ENCODE measurements at regions of chr7 and their contacts with region 1.

Region 1: GRCh38 chr7:130242198-130243014 is 24.3 kb upstream of the CPA2 start:
- DNase-seq: peak; percentile 82
- ATAC-seq: peak; percentile 92
- H3K4me3 ChIP-seq: no peak overlapping the region
- H3K27ac ChIP-seq: no peak overlapping the region
- H3K4me1 ChIP-seq: no peaks in the 10 kb centered on the region
- H3K27me3 ChIP-seq: no peaks in the 10 kb centered on the region
- CTCF ChIP-seq: peak; percentile 64
- POLR2A ChIP-seq: no peak
- RAD21 ChIP-seq: peak; percentile 80

Region 2: GRCh38 chr7:129252128-129252527 is 990.3 kb before region 1 on chr7:
- CTCF ChIA-PET with region 1: no interaction called
- POLR2A ChIA-PET with region 1: no interaction called
- dilution Hi-C with region 1: no loop called
- in situ Hi-C with region 1: no loop called
- intact Hi-C with region 1: no loop called
- DNase-seq: no peak
- ATAC-seq: no peak
- H3K4me3 ChIP-seq: no peak overlapping the region
- H3K27ac ChIP-seq: no peak overlapping the region
- H3K4me1 ChIP-seq: peaks cover 3% of the 10 kb centered on the region; the same call in 1 of the 2 replicates
- H3K27me3 ChIP-seq: no peaks in the 10 kb centered on the region
- CTCF ChIP-seq: no peak
- POLR2A ChIP-seq: no peak
- RAD21 ChIP-seq: no peak

Region 3: DNA sequence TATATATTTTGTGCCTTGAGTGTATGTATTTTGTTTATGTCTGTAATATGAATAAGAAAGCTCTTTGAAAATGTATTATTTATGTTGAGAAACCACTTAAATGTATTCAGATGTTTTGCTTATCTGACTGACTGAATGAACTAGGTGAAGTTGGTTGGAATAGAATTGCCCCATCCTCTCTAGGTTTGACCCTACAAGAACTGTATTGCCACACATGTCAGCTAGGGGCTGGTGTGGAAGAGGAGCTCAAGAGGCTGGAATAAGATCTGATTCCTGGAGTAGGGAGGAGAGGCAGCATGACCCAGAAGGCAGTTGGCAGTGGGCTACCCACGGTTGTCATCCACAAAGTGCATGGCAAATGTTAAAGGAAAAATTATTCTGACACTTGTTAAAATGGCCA is 25.7 kb before region 1 on chr7:
- CTCF ChIA-PET with region 1: interaction called, 13 read pairs
- POLR2A ChIA-PET with region 1: no interaction called
- dilution Hi-C with region 1: no loop called
- in situ Hi-C with region 1: no loop called
- intact Hi-C with region 1: no loop called
- DNase-seq: no peak
- ATAC-seq: no peak
- H3K4me3 ChIP-seq: no peak overlapping the region
- H3K27ac ChIP-seq: no peak overlapping the region
- H3K4me1 ChIP-seq: no peaks in the 10 kb centered on the region
- H3K27me3 ChIP-seq: peaks cover 7% of the 10 kb centered on the region; the same call in 1 of the 2 replicates
- CTCF ChIP-seq: no peak
- POLR2A ChIP-seq: no peak
- RAD21 ChIP-seq: no peak

Region 4: DNA sequence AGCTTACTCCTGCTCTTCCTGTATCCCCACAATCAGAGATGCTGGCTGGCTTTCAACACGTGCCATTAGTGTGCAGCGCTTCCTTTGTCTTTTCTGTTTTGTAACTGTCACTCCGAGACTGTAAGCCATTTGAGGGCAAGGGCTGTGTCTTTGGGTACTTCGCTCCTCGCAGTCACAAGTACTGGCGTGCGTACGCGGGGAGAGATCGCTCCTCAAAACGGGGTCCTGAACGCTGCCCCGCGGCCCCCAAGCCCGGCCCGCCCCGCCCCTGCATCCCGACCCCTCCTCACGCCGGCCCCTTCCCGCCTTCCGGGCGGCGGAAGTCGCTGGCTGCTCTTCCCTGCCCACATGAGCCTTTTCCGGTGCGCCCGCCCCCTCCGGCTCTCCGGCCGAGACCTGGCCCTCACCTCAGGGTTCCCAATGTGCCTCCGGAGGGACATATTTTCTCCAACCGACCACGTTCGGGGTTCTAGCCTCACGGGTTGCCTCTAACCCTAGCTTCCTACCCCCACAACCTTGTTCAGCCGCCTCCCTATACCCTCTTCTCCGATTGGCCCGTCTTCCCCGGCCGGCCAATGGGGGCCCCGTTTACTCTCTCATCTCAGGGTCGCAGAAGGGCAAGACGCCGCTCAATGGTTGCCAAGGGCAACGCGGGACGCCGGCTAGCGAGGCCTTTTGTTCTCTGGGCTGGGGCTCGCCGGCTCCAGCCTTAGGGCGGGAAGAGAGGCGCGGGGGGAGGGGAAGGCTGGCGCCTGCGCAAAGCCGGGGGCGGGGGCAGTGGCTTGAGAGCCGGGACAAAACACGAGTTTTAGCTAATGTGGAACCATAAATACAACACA is 198.3 kb after region 1 on chr7 and contains the start of gene CEP41:
- CTCF ChIA-PET with region 1: no interaction called
- POLR2A ChIA-PET with region 1: no interaction called
- dilution Hi-C with region 1: no loop called
- in situ Hi-C with region 1: no loop called
- intact Hi-C with region 1: loop called (anchors 5 kb)
- DNase-seq: peak; percentile 96
- ATAC-seq: peak; percentile 99
- H3K4me3 ChIP-seq: peak within 1 kb of the TSS; percentile 72
- H3K27ac ChIP-seq: peak within 1 kb of the TSS; percentile 99
- H3K4me1 ChIP-seq: peaks cover 6% of the 10 kb centered on the region
- H3K27me3 ChIP-seq: no peaks in the 10 kb centered on the region
- CTCF ChIP-seq: no peak
- POLR2A ChIP-seq: no peak
- RAD21 ChIP-seq: no peak
- total RNA-seq, gene CEP41: 11.1 and 12.2 TPM in 2 replicates

Region 5: DNA sequence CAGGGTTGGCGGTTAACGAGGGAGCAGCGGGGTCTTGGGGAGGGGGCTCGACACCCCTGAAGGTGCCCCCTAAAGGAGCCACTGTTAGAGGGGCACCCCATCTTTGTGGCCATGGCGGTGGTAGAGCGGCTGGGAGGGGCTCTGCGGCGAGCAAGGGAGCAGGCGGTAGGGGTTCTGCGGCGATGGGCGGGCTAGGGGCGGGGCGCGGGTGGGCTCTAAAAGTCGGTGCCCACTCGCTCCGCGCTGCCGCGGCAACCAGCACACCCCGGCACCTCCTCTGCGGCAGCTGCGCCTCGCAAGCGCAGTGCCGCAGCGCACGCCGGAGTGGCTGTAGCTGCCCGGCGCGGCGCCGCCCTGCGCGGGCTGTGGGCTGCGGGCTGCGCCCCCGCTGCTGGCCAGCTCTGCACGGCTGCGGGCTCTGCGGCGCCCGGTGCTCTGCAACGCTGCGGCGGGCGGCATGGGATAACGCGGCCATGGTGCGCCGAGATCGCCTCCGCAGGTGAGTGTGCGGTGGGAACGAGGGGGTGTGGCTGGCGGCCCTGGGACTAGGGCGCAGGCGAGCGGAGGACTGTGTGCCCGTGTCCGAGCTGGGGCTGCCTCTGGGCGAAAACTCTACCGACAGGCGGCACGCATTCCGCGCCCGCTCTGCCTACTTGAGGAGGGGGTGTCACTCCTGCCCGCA is 249.6 kb after region 1 on chr7 and contains the start of gene MEST:
- CTCF ChIA-PET with region 1: no interaction called
- POLR2A ChIA-PET with region 1: no interaction called
- dilution Hi-C with region 1: no loop called
- in situ Hi-C with region 1: no loop called
- intact Hi-C with region 1: loop called (anchors 2 kb)
- DNase-seq: peak; percentile 47
- ATAC-seq: peak; percentile 61
- H3K4me3 ChIP-seq: peak within 1 kb of the TSS; percentile 71
- H3K27ac ChIP-seq: peak within 1 kb of the TSS; percentile 45
- H3K4me1 ChIP-seq: peaks cover 11% of the 10 kb centered on the region
- H3K27me3 ChIP-seq: no peaks in the 10 kb centered on the region
- CTCF ChIP-seq: no peak
- POLR2A ChIP-seq: 0 out of 2 replicates have a peak, but pooled peaks have one; percentile 22
- RAD21 ChIP-seq: no peak
- total RNA-seq, gene MEST: 231 and 317 TPM in 2 replicates

Region 6: DNA sequence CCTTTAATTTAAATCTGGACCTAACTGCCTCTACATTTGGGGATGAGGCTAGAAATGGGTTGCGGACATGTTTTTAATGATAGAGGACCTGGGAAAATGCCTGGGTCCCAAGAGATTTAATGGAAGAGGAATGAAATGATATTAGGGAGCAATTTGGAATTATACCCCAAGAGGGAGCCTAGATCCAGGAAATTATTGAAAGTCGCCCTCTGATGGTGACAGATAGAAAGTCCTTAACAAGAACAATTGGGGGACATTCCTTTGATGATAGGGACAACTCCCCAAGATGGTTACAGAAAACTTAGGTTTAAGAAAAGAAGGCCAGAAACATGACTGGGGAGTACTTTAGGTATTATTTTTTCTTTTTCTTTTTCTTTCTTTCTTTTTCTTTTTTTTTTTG is 453.4 kb after region 1 on chr7:
- CTCF ChIA-PET with region 1: no interaction called
- POLR2A ChIA-PET with region 1: no interaction called
- dilution Hi-C with region 1: no loop called
- in situ Hi-C with region 1: no loop called
- intact Hi-C with region 1: loop called (anchors 10 kb)
- DNase-seq: peak; percentile 45
- ATAC-seq: peak; percentile 60
- H3K4me3 ChIP-seq: no peak overlapping the region
- H3K27ac ChIP-seq: no peak overlapping the region
- H3K4me1 ChIP-seq: no peaks in the 10 kb centered on the region
- H3K27me3 ChIP-seq: peaks cover 6% of the 10 kb centered on the region
- CTCF ChIP-seq: peak; percentile 81
- POLR2A ChIP-seq: no peak
- RAD21 ChIP-seq: peak; percentile 57

Region 7: GRCh38 chr7:130721486-130722280 is 479.3 kb after region 1 on chr7:
- CTCF ChIA-PET with region 1: interaction called, 3 read pairs
- POLR2A ChIA-PET with region 1: no interaction called
- dilution Hi-C with region 1: no loop called
- in situ Hi-C with region 1: no loop called
- intact Hi-C with region 1: loop called (anchors 1 kb)
- DNase-seq: peak; percentile 69
- ATAC-seq: peak; percentile 100
- H3K4me3 ChIP-seq: no peak overlapping the region
- H3K27ac ChIP-seq: no peak overlapping the region
- H3K4me1 ChIP-seq: no peaks in the 10 kb centered on the region
- H3K27me3 ChIP-seq: peaks cover 25% of the 10 kb centered on the region
- CTCF ChIP-seq: peak; percentile 79
- POLR2A ChIP-seq: no peak
- RAD21 ChIP-seq: peak; percentile 85

Region 8: GRCh38 chr7:130758429-130759056 is 516.1 kb after region 1 on chr7:
- CTCF ChIA-PET with region 1: no interaction called
- POLR2A ChIA-PET with region 1: no interaction called
- dilution Hi-C with region 1: no loop called
- in situ Hi-C with region 1: no loop called
- intact Hi-C with region 1: loop called (anchors 1 kb)
- DNase-seq: peak; percentile 69
- ATAC-seq: peak; percentile 82
- H3K4me3 ChIP-seq: no peak overlapping the region
- H3K27ac ChIP-seq: no peak overlapping the region
- H3K4me1 ChIP-seq: no peaks in the 10 kb centered on the region
- H3K27me3 ChIP-seq: peaks cover 20% of the 10 kb centered on the region
- CTCF ChIP-seq: peak; percentile 77
- POLR2A ChIP-seq: no peak
- RAD21 ChIP-seq: peak; percentile 78